Dendritic cell treated with granulocyte-macrophage colony-stimulating factor and Interleukin-4, amounts not matched to agents 40 ng/mL and 50 ng/mL, for 4 days (primary cell): ENCODE measurements at regions of chr15 and their contacts with region 1.

Region 1: GRCh38 chr15:61916104-61916503 is 144.1 kb downstream of the VPS13C start:
- H3K4me3 Mint-ChIP-seq: no peak overlapping the region
- H3K27ac Mint-ChIP-seq: no peak overlapping the region
- H3K4me1 Mint-ChIP-seq: no peaks in the 10 kb centered on the region
- H3K27me3 Mint-ChIP-seq: no peaks in the 10 kb centered on the region

Region 2: DNA sequence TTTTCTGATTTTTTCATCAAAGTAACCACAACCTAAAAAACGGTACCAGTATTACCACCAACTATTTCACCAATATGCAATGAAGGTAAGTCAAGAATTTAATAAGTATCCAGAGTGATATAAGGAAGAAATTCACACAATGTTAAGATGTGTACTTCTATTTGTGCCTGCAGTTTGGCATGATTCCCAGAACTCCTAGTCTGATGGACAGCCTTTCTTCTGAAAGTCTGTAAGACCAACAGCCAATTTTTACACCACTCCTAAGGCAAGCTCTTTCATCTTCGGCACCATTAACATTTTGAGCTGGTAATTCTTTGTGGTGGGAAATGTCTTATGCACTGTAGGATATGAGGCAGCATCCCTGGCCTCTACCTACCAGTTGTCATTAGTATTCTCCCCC is 35.8 kb after region 1 on chr15:
- intact Hi-C with region 1: loop called (anchors 5 kb)
- H3K4me3 Mint-ChIP-seq: no peak overlapping the region
- H3K27ac Mint-ChIP-seq: no peak overlapping the region
- H3K4me1 Mint-ChIP-seq: no peaks in the 10 kb centered on the region
- H3K27me3 Mint-ChIP-seq: no peaks in the 10 kb centered on the region